CD4-positive, alpha-beta memory T cell (primary cell): ENCODE measurements at regions of chr1 and their contacts with region 1.

Region 1: DNA sequence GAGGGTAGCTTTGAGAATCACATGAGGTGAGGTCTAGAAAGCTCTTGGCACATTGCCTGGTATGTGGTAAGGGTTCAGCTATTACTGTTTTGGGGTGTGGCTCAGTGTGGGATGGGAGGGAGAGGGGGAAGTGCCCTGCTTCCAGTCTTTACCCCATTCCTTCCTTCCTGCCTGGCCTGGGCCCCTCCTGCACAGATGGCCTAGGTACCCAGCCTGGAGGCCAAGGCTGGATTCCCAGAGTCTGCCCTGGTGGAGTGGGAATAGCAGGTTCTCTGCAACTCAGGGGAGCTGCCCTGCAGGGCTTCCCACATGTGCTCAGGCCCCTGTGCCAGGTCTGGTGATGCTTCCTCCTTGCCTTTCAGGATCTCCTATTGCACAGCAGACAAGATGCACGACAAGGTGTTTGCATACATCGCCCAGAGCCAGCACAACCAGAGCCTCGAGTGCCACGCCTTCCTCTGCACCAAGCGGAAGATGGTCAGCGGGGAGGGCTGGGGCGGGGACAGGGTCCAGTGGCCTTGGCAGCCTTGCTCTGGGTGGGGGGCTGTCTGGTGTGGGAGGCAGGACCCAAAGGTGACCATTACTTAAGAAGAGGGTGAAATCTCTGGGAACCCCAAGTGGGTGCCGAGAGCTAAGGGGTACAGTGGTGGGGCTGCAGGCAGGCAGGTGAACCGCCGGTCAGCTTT is 13.5 kb downstream of the LDLRAP1 start:
- DNase-seq: peak in 4 of 5 donors; percentile 57 to 63 (median 60)
- H3K4me3 ChIP-seq: no peak overlapping the region
- H3K4me3 Mint-ChIP-seq: peak overlapping the region; percentile 52 to 78 (median 66)
- H3K27ac ChIP-seq: peak overlapping the region; percentile 45
- H3K27ac Mint-ChIP-seq: peak overlapping the region; percentile 75 to 98 (median 95)
- H3K4me1 ChIP-seq: peaks cover 100% of the 10 kb centered on the region
- H3K4me1 Mint-ChIP-seq: peaks cover 69 to 100% (median 90%) of the 10 kb centered on the region in 4 donors
- H3K27me3 ChIP-seq: no peaks in the 10 kb centered on the region
- H3K27me3 Mint-ChIP-seq: no peaks in the 10 kb centered on the region

Region 2: GRCh38 chr1:25572708-25573600 is 16.0 kb after region 1 on chr1:
- CTCF ChIA-PET with region 1: interaction called, 15 read pairs
- POLR2A ChIA-PET with region 1: interaction called, 615 read pairs
- intact Hi-C with region 1: no loop called
- DNase-seq: peak in 4 of 5 donors; percentile 29 to 41 (median 36)
- H3K4me3 ChIP-seq: no peak overlapping the region
- H3K4me3 Mint-ChIP-seq: no peak overlapping the region
- H3K27ac ChIP-seq: no peak overlapping the region
- H3K27ac Mint-ChIP-seq: peak overlapping the region in 6 of 7 donors; percentile 27 to 77 (median 68)
- H3K4me1 ChIP-seq: peaks cover 31% of the 10 kb centered on the region
- H3K4me1 Mint-ChIP-seq: peaks cover 10 to 57% (median 30%) of the 10 kb centered on the region in 4 donors
- H3K27me3 ChIP-seq: no peaks in the 10 kb centered on the region
- H3K27me3 Mint-ChIP-seq: no peaks in the 10 kb centered on the region

Region 3: DNA sequence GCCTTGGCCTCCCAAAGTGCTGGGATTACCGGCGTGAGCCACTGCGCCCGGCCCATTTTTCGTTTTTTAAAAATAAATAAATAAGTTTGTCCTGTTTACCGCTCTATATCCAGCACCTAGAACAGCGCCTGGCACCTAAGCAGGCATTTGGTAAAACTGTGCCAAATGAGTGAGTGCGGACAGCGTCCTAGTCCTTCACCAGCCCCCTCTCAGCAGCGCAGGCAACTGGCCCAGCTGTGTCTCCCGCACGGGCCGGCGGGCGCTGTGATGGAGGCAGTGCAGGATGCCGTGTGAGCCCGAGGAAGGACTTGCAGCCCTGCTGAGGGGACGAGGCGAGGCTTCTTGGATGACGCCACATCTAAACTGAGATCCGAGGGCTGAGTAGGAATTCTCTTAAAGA is 35.7 kb after region 1 on chr1:
- CTCF ChIA-PET with region 1: no interaction called
- POLR2A ChIA-PET with region 1: no interaction called
- intact Hi-C with region 1: no loop called
- DNase-seq: no peak
- H3K4me3 ChIP-seq: no peak overlapping the region
- H3K4me3 Mint-ChIP-seq: peak overlapping the region in 1 of 8 donors; percentile 41
- H3K27ac ChIP-seq: no peak overlapping the region
- H3K27ac Mint-ChIP-seq: no peak overlapping the region
- H3K4me1 ChIP-seq: peaks cover 9% of the 10 kb centered on the region
- H3K4me1 Mint-ChIP-seq: peaks cover 9 to 21% (median 12%) of the 10 kb centered on the region in 4 donors
- H3K27me3 ChIP-seq: no peaks in the 10 kb centered on the region
- H3K27me3 Mint-ChIP-seq: no peaks in the 10 kb centered on the region